Cardiac septum (tissue), 1 donor: ENCODE measurements at regions of chr1 and their contacts with region 1.

Region 1: DNA sequence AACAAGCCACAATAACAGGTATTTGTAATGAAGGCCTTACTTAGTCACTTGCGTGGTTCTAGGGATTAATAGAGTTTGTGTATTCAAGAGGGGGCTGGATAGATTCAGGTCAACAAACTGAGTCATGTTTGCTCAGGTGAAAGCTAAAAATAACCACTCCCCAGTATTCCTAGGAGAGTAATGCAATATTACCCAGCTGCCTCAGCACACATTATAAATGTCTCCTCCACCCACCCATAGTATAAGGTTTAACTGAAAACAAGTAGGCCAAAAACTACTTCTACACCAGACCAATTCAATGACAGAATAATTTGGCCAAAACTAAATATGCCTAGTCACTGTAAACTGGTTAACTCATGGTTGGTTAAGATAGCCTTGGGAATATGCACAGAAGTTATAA is 34.4 kb downstream of the WLS start:
- DNase-seq: no peak

Region 2: DNA sequence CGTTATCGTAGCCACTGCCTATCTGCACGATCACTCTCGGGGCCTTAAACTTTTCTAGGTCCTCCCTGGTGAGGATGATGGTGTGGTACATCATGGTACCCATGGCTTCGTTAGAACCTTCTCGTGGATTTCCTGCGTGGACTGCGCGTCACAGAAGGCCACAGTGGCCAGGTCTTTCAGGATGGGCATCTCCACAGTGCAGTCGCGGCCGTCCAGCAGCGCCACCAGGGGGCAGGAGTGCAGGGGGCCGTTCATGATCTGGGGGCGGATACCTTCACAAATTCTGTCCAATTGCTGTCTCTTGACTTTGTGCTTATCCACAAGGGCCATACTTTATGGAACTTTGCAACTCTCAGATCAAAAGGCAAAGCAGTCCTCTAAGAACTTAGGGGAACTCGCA is 35.1 kb before region 1 on chr1:
- intact Hi-C with region 1: no loop called
- DNase-seq: no peak

Region 3: DNA sequence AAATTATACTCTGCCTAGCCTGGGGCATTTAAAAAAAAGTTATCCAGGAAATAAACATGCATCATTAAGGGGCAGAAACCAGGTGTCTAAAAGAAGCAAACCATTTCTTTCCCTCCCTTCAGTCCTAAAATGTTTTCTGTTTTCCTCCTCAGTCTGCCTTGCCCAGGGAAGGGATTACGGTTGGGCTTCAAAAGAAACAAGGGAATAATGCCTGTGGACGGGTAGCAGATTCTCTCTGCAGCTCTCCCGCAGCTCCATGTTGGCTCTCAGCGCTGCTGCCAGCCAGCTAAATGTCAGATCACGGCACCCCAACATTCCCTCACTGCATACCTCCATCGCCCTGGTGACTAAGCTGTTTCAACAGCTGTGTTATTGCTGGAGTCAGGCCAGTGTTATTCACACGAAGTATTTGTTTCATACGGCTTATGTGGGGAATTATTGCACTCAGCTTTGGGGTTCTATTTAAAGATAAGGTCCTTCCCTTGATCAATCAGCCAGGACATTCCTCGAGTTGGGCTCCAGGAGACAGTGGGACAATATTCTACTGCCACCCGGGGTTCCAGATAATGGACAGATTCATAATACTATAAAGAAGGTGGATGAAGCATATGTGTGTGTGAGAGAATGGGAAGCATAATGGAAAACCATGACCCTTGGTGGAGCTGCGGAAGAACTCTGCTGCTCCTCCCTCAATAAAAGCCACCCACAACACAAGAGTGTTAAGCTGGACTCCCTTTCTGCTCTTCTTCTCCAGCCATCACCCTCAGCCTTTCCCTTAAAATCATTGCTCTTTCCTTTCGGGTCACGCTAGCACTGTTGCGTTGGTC is 23.8 kb before region 1 on chr1:
- intact Hi-C with region 1: loop called (anchors 2 kb)
- DNase-seq: no peak

Region 4: DNA sequence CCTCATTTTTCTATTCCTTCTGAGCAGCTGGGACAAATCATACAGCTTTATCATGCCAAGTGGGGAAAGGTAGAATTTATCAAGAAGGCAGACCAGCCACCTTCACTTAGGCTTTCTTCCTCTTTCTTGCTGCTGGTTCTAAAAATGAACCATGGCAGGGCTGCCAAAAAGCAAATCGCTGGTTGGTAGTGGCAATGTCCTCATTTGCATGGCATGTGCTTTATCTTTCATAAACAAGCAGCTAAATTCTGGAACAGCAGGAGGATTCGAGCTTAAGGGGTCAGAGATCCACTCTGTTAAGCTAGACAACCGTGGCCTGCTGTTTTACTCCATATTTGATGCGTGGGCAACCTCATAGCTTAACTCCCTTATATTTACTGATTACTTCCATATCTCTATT is 160.5 kb after region 1 on chr1:
- intact Hi-C with region 1: no loop called
- DNase-seq: no peak